ENCODE measurements at regions of chr12 and their contacts with region 1.

Region 1: GRCh38 chr12:121059031-121059898 is 20.2 kb upstream of the OASL start:
- DNase-seq: no peak
- ATAC-seq: no peak
- H3K4me3 ChIP-seq: no peak overlapping the region
- H3K27ac ChIP-seq: peak overlapping the region; percentile 50
- H3K4me1 ChIP-seq: peaks cover 4% of the 10 kb centered on the region
- H3K27me3 ChIP-seq: peaks cover 0 to 24% (median 3%) of the 10 kb centered on the region in 3 donors
- CTCF ChIP-seq: no peak

Region 2: GRCh38 chr12:120961604-120962531 is 97.4 kb before region 1 on chr12:
- intact Hi-C with region 1: no loop called
- DNase-seq: peak in 1 of 2 donors; percentile 33
- ATAC-seq: no peak
- H3K4me3 ChIP-seq: no peak overlapping the region
- H3K27ac ChIP-seq: no peak overlapping the region
- H3K4me1 ChIP-seq: no peaks in the 10 kb centered on the region
- H3K27me3 ChIP-seq: no peaks in the 10 kb centered on the region
- CTCF ChIP-seq: no peak

Region 3: GRCh38 chr12:121095544-121096198 is 36.4 kb after region 1 on chr12:
- intact Hi-C with region 1: loop called in 1 of 2 experiments (anchors 5 kb)
- DNase-seq: peak; percentile 60 to 80
- ATAC-seq: peak; percentile 66 to 88 (median 78)
- H3K4me3 ChIP-seq: peak overlapping the region; percentile 50
- H3K27ac ChIP-seq: no peak overlapping the region
- H3K4me1 ChIP-seq: no peaks in the 10 kb centered on the region
- H3K27me3 ChIP-seq: peaks cover 0 to 7% (median 3%) of the 10 kb centered on the region in 3 donors
- CTCF ChIP-seq: peak; percentile 73